Ascending aorta (tissue), 2 donors: ENCODE measurements at regions of chr3 and their contacts with region 1.

Region 1: GRCh38 chr3:111967651-111968274 is 11.1 kb upstream of the ABHD10 start:
- DNase-seq: peak; percentile 41 to 94
- H3K4me3 ChIP-seq: no peak overlapping the region
- H3K27ac ChIP-seq: peak overlapping the region in 1 of 2 donors; percentile 37
- H3K4me1 ChIP-seq: peaks cover 0 to 6% of the 10 kb centered on the region in 2 donors
- H3K27me3 ChIP-seq: no peaks in the 10 kb centered on the region
- CTCF ChIP-seq: peak; percentile 77 to 88 (median 80)

Region 2: DNA sequence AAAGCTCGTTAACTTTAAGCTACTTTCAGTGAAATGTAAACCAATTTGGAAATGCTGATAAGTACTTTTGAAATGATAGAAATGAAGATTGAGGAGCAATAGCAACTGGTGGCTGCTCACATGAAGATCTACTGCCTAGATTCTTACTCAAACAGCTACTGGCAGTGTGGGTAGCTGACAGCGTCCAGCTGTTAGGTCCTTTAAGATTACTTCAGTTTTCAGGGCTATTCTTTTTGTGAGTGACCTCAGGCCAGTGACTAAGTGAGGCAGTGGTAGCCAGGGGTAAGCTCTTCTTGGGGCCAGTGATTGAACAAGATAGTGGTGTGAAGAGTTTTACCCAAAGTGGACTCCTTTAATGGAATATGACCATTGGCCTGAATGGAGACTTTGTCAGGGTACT is 854.9 kb before region 1 on chr3:
- intact Hi-C with region 1: no loop called
- DNase-seq: no peak
- H3K4me3 ChIP-seq: no peak overlapping the region
- H3K27ac ChIP-seq: no peak overlapping the region
- H3K4me1 ChIP-seq: no peaks in the 10 kb centered on the region
- H3K27me3 ChIP-seq: no peaks in the 10 kb centered on the region
- CTCF ChIP-seq: no peak

Region 3: DNA sequence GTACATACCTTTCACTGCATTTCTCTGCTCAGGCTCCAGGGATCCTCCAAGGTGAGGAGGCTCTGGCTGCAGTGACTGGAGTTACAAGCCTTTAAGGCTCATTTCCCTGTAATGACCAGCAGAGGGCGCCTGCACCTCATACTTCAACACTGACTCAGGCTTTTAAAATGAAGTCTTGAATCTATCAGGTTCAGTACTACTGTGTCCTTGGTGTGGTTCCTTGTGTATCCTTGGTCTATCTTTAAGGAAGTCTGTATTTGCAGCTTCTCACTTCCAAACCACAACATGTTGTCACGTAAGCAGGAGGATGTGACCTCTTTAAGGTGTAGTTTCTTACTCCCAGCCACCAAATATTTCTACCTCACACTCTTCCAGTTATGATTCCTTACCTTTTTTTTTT is 250.2 kb before region 1 on chr3:
- intact Hi-C with region 1: loop called (anchors 1 kb)
- DNase-seq: peak in 1 of 2 donors; percentile 92
- H3K4me3 ChIP-seq: no peak overlapping the region
- H3K27ac ChIP-seq: no peak overlapping the region
- H3K4me1 ChIP-seq: peaks cover 3% of the 10 kb centered on the region in 2 donors
- H3K27me3 ChIP-seq: no peaks in the 10 kb centered on the region
- CTCF ChIP-seq: peak; percentile 89 to 95 (median 92)